CD8-positive, alpha-beta T cell (primary cell): ENCODE measurements at regions of chr18 and their contacts with region 1.

Region 1: DNA sequence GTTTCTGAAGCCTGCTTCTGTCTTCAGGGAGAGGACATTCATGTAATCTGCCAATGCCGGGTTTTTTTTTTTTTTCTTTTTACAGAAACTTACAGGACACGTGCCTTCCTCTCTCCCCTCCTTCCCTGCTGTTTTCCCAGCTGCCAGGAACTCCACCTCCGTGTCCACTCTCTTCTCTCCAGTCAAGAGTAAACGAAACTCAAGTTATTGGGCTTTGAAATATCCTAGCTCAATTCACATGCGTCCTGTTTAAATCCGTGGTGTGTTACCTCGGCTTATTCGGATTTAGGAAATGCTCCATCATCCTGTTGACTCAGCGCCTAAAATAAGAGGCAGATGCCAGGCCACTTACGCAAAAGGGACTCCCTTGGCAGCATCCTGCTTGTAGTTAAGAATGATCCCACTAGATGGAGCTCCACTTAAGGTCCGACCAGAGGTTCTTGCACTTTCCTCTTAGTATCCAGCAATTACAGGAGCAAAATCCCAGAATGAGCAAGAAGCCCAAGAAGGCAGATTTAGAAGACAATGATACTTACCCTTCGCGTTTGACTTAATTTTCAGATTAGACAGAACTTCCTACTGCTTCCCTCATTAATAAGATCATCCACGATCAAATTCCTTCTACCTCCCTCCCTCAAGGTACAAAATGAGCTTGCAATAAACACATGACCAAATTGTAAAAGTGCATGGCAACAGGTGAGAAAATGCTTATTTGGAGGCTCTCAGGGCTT is 97.2 kb upstream of the ZCCHC2 start:
- DNase-seq: peak; percentile 3 to 82 (median 46)
- ATAC-seq: peak; percentile 45
- H3K4me3 ChIP-seq: no peak overlapping the region
- H3K4me3 Mint-ChIP-seq: no peak overlapping the region
- H3K27ac ChIP-seq: no peak overlapping the region
- H3K27ac Mint-ChIP-seq: no peak overlapping the region
- H3K4me1 ChIP-seq: peaks cover 5% of the 10 kb centered on the region
- H3K4me1 Mint-ChIP-seq: peaks cover 17% of the 10 kb centered on the region
- H3K27me3 ChIP-seq: no peaks in the 10 kb centered on the region
- H3K27me3 Mint-ChIP-seq: no peaks in the 10 kb centered on the region
- CTCF ChIP-seq: peak; percentile 87

Region 2: GRCh38 chr18:62324917-62325805 is 100.5 kb before region 1 on chr18 and contains the start of gene TNFRSF11A:
- CTCF ChIA-PET with region 1: interaction called, 3 read pairs
- POLR2A ChIA-PET with region 1: no interaction called
- intact Hi-C with region 1: loop called in 1 of 2 experiments (anchors 5 kb)
- DNase-seq: peak; percentile 35 to 69 (median 61)
- ATAC-seq: peak; percentile 90
- H3K4me3 ChIP-seq: peak within 1 kb of the TSS; percentile 45 to 51
- H3K4me3 Mint-ChIP-seq: peak within 1 kb of the TSS; percentile 80
- H3K27ac ChIP-seq: no peak within 1 kb of the TSS
- H3K27ac Mint-ChIP-seq: no peak within 1 kb of the TSS
- H3K4me1 ChIP-seq: peaks cover 24% of the 10 kb centered on the region
- H3K4me1 Mint-ChIP-seq: peaks cover 26% of the 10 kb centered on the region
- H3K27me3 ChIP-seq: peaks cover 25 to 27% of the 10 kb centered on the region in 2 experiments
- H3K27me3 Mint-ChIP-seq: peaks cover 71% of the 10 kb centered on the region
- CTCF ChIP-seq: peak; percentile 25
- total RNA-seq, gene TNFRSF11A: 0.03 to 0.28 TPM

Region 3: DNA sequence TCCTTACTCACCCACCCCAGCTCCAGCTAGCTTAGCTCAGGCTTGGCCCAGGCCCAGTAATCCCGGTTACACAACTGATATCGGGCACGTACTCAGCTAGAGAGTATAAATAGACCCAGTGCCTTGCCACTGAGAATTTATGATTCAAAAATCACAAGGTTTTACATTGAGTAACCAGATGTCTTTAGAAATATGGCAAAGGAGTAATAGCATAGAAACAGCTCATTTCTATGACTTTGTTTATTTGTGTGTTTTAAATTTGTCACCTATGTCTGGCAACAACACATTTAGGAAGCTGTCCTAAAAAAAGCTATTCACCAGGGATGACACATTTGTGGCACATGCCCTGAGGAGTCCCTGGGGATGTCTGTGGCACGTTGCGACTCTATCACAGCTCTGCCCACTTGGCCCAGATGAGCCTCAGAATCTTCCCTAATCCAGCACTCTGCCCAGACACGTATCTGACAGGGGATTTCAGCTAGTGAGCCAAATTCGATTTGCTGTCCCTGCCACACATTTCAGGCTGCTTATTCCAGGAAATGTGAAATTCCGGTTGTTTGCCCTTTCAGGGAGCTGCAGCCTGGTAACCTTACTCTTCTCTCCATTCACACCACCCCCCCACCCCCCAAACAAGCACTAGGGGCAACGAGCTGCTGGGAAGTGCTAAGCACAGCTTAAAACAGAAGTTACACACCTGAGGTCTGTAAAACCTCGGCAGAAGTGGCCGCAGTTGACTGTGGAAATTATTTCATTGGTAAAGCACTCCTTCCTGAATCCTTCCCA is 11.8 kb after region 1 on chr18:
- CTCF ChIA-PET with region 1: interaction called, 18 read pairs
- POLR2A ChIA-PET with region 1: no interaction called
- intact Hi-C with region 1: no loop called
- DNase-seq: no peak
- ATAC-seq: no peak
- H3K4me3 ChIP-seq: no peak overlapping the region
- H3K4me3 Mint-ChIP-seq: no peak overlapping the region
- H3K27ac ChIP-seq: no peak overlapping the region
- H3K27ac Mint-ChIP-seq: no peak overlapping the region
- H3K4me1 ChIP-seq: no peaks in the 10 kb centered on the region
- H3K4me1 Mint-ChIP-seq: no peaks in the 10 kb centered on the region
- H3K27me3 ChIP-seq: no peaks in the 10 kb centered on the region
- H3K27me3 Mint-ChIP-seq: no peaks in the 10 kb centered on the region
- CTCF ChIP-seq: no peak

Region 4: DNA sequence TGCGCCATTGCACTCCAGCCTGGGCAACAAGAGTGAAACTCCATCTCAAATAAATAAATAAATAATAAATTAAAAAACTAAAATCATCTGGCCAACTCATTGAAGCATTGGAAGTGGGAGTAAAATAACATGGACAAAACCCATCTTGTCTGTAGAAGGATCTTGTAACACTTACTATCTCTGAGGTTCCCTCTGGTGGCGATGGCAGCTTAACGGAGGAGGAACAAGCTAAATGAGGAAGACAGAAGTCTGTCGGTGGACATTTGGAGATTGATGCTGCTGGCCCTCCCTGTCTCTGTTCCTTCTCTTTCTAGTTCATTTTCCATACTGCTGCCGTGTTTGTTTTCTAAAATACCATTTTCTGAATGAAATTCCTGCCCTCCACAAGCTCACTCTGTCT is 140.6 kb after region 1 on chr18:
- CTCF ChIA-PET with region 1: interaction called, 8 read pairs
- POLR2A ChIA-PET with region 1: no interaction called
- intact Hi-C with region 1: loop called in 1 of 2 experiments (anchors 5 kb)
- DNase-seq: peak in 3 of 9 experiments; percentile 23 to 43 (median 34)
- ATAC-seq: no peak
- H3K4me3 ChIP-seq: no peak overlapping the region
- H3K4me3 Mint-ChIP-seq: no peak overlapping the region
- H3K27ac ChIP-seq: no peak overlapping the region
- H3K27ac Mint-ChIP-seq: no peak overlapping the region
- H3K4me1 ChIP-seq: no peaks in the 10 kb centered on the region
- H3K4me1 Mint-ChIP-seq: no peaks in the 10 kb centered on the region
- H3K27me3 ChIP-seq: no peaks in the 10 kb centered on the region
- H3K27me3 Mint-ChIP-seq: no peaks in the 10 kb centered on the region
- CTCF ChIP-seq: peak; percentile 31

Region 5: DNA sequence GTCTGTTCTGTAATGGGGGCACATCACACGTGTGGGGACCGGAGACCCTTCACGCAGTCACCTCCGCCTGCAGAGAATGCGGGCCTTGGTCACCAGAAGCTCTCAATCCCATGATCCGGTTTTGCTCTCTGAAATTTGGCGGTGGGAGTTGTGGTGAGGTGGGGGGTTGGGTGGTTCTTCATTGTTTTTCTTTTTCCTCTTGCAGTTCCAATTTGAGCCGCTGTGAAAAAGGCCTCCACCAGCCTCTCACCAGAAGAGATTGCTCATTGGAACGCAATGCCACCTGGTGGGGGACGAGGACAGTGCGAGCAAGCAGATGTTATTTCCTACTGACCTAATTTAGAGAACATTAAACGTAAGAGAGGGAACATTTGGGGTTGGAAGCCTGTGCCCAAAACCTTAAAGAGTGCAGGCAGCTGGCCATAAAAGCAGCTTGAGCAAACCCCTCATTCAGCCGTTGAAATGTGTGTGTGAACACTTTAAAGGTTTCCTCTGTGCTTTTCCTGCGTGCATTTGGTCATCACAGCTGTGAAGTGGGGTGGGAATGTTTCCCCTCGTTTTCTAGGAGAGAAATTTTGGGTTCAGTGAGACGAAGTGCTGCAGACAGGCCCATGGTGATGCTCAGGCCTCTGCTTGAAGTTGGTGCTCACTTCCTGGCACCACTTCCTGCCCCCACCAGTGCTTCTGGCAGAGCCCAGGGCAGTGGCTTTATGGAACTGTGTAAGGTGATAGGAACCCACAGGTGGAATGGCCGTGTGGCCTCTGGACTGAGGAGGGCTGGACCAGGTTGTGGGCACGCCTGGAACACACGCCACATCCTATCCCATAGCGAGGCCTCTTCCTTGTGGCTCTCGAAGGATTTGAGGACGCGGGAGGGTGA is 158.9 kb after region 1 on chr18:
- CTCF ChIA-PET with region 1: interaction called, 36 read pairs
- POLR2A ChIA-PET with region 1: no interaction called
- intact Hi-C with region 1: loop called (anchors 1 to 2 kb)
- DNase-seq: peak; percentile 62 to 91 (median 83)
- ATAC-seq: peak; percentile 99
- H3K4me3 ChIP-seq: no peak overlapping the region
- H3K4me3 Mint-ChIP-seq: peak overlapping the region; percentile 33
- H3K27ac ChIP-seq: peak overlapping the region in 1 of 2 experiments; percentile 30
- H3K27ac Mint-ChIP-seq: peak overlapping the region; percentile 39
- H3K4me1 ChIP-seq: peaks cover 16% of the 10 kb centered on the region
- H3K4me1 Mint-ChIP-seq: peaks cover 29% of the 10 kb centered on the region
- H3K27me3 ChIP-seq: no peaks in the 10 kb centered on the region
- H3K27me3 Mint-ChIP-seq: no peaks in the 10 kb centered on the region
- CTCF ChIP-seq: peak; percentile 98

Region 6: GRCh38 chr18:62982600-62983251 is 557.1 kb after region 1 on chr18:
- CTCF ChIA-PET with region 1: interaction called, 3 read pairs
- POLR2A ChIA-PET with region 1: interaction called, 3 read pairs
- intact Hi-C with region 1: loop called (anchors 1 to 5 kb)
- DNase-seq: peak; percentile 25 to 77 (median 57)
- ATAC-seq: peak; percentile 65
- H3K4me3 ChIP-seq: no peak overlapping the region
- H3K4me3 Mint-ChIP-seq: peak overlapping the region; percentile 62
- H3K27ac ChIP-seq: no peak overlapping the region
- H3K27ac Mint-ChIP-seq: no peak overlapping the region
- H3K4me1 ChIP-seq: no peaks in the 10 kb centered on the region
- H3K4me1 Mint-ChIP-seq: peaks cover 6% of the 10 kb centered on the region
- H3K27me3 ChIP-seq: no peaks in the 10 kb centered on the region
- H3K27me3 Mint-ChIP-seq: no peaks in the 10 kb centered on the region
- CTCF ChIP-seq: peak; percentile 70

Region 7: DNA sequence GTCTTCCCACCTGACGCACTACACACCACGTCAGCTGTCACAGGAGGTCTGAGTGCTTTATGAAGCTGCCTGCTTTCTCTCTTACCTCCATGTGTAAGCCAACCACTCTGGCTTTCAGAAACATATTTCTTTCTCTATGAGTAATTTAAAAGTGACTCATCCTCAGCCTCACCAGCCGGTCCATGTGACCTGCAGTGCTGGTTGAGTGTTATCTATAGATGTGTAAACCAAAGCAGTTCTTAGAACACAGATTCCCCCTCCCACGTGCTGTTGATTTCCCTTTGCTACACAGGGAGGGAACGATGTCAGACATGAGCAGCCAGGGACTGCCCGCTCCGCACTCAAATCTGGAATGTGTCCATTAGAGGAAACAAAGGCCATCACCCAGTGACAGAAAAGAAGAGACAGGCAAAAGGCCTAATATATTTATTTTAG is 736.1 kb after region 1 on chr18:
- CTCF ChIA-PET with region 1: no interaction called
- POLR2A ChIA-PET with region 1: no interaction called
- intact Hi-C with region 1: loop called in 1 of 2 experiments (anchors 2 kb)
- DNase-seq: peak; percentile 51 to 94 (median 78)
- ATAC-seq: peak; percentile 85
- H3K4me3 ChIP-seq: peak overlapping the region; percentile 17 to 30
- H3K4me3 Mint-ChIP-seq: peak overlapping the region; percentile 65
- H3K27ac ChIP-seq: peak overlapping the region; percentile 81 to 99
- H3K27ac Mint-ChIP-seq: peak overlapping the region; percentile 98
- H3K4me1 ChIP-seq: peaks cover 77% of the 10 kb centered on the region
- H3K4me1 Mint-ChIP-seq: peaks cover 91% of the 10 kb centered on the region
- H3K27me3 ChIP-seq: no peaks in the 10 kb centered on the region
- H3K27me3 Mint-ChIP-seq: no peaks in the 10 kb centered on the region
- CTCF ChIP-seq: no peak